Posterior vena cava (tissue), 2 donors: ENCODE measurements at regions of chr11 and their contacts with region 1.

Region 1: GRCh38 chr11:9137293-9138132 is 46.1 kb upstream of the SCUBE2 start:
- DNase-seq: peak; percentile 93

Region 2: GRCh38 chr11:9015677-9016076 is 121.8 kb before region 1 on chr11:
- intact Hi-C with region 1: loop called (anchors 5 to 10 kb)
- DNase-seq: no peak

Region 3: DNA sequence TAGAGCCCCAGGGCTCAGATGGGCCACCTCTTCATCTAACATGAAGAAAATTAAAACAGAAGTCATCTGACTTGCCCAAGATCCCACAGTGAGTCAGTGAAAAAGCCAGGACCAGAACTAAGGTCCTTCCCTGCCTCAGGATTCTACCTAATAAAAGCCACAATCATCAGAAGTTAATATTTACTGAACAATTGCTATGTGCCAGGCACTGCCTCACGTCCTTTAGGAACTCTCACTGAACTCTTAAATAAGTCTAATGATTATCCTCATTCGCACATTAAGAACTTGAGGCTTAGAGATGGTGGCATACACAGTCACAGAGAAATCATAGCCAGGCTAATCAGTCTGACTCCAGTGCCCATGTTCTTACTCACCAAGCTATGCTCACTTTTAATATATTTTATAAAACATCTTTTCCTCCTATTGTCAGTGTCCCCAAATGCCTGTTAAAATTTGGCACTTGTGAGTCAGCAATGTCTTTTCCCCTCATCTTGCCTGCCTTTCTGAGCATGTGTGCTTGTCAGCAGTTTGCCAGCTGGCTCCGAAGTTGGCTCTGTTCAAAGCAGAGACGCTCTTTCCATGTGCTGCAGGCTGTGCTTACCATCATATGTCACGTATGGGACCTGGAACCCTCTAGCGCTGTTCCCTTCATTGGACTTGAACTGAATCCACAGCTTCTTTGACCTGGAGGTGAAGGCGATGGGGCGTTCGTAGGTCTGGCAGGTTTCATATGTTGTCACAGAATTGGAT is 112.2 kb before region 1 on chr11:
- intact Hi-C with region 1: loop called in 1 of 2 experiments (anchors 10 kb)
- DNase-seq: no peak